ENCODE measurements at regions of chr9 and their contacts with region 1.

Region 1: DNA sequence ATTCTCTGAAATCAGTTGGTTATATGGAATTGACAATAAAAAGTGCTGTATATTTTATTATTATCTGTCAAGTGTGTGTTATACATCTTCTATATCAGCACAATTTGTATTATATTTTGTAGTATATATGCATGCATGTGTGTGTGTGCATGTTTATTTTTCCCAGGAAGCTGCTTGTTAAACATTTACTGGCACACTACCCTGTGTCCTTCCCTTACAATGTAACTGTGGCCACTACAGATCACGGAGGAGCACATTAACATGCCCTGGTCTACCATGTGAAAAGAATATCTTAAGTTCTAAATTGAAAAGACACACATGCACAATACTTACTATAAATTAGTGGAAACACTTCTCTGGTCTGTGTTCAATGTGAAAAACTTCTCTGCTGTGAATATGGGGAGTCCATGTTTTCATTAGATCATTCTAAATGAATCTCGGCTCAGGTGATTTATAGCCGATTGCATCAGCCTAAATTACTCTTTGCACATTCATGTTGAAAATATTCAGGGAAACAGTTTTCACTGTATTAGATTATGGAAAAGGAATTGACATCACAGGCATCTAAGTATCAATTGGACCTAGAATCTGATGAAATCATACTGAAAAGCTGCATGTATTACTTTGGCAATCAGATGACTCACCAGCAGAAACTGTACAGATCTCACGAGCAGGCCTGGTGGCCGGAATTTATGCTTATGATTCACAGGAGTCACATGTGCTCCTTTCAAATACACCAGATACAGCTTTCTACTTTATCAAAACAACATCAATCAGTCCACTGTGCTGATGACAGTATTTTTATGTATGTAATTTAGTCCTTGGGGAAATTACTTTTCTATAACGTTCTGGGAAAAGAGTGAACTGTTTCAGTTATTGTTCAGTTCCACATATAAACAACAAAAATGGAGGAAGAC is 39.4 kb downstream of the LURAP1L start:
- DNase-seq: peak; percentile 97
- ATAC-seq: peak; percentile 90
- H3K4me3 ChIP-seq: peak overlapping the region; percentile 32 to 45
- H3K27ac ChIP-seq: peak overlapping the region; percentile 78
- H3K4me1 ChIP-seq: peaks cover 29 to 43% of the 10 kb centered on the region in 2 experiments; a peak in 3 of 4 replicates
- H3K27me3 ChIP-seq: no peaks in the 10 kb centered on the region
- CTCF ChIP-seq: peak in 2 of 3 experiments; percentile 36 to 46; a peak in 4 of 6 replicates
- POLR2A ChIP-seq: no peak
- RAD21 ChIP-seq: peak; percentile 19

Region 2: DNA sequence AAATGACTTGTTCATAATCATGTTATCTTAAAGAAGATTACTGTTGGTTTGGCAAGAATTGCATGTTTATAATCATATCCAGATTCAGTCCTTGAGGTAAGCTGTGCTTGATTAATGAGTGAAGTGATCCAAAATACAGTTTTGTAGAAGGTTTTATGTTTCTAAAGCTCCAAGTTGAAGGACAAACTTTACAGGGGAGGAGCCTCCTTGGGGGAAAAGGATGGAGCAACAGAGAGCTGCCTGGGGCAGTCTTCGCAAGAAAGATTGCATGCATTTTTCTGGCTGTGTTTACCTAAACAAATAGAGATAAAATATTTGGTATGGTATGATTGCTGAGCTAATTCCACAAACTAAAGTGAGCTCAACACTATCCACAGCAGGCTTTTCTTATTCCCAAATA is 310.5 kb before region 1 on chr9:
- CTCF ChIA-PET with region 1: no interaction called
- POLR2A ChIA-PET with region 1: no interaction called
- RAD21 ChIA-PET with region 1: no interaction called
- intact Hi-C with region 1: no loop called
- DNase-seq: no peak
- ATAC-seq: no peak
- H3K4me3 ChIP-seq: no peak overlapping the region
- H3K27ac ChIP-seq: no peak overlapping the region
- H3K4me1 ChIP-seq: no peaks in the 10 kb centered on the region
- H3K27me3 ChIP-seq: no peaks in the 10 kb centered on the region
- CTCF ChIP-seq: no peak
- POLR2A ChIP-seq: no peak
- RAD21 ChIP-seq: no peak

Region 3: DNA sequence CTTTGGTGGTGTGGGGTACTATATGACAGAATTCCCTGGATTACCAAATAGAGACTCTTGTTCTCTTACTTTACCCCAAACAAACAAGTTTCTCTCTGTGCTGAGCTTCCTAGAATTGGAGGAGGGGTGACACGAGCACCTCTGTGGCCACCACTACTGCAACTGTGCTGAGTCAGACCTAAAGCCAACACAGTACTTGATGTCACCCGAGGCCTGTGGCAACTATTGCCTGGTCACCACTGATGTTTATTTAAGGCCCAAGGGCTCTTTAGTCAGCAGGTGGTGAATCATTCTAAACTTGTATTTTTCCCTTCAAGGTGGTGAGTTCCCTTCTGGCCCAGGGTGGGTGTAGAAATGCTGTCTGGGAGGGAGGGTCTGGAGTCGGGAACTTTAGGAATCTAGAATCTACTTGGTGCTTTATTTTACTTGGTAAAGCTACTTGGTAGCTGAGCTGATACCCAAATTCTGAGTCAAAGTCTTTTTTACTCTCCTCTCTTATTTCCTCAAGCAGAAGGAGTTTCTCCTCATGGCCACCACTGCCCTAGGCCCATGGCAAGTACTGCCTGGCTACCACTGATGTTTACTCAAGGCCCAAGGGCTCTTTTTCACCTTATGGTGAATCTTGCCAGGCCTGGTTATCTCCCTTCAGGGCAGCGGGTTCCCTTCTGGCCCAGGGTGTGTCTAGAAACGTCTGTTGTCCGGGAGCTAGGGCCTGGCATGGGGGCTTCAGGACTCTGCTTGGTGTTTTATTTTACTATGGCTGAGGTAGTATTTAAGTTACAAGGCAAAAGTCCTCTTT is 29.6 kb before region 1 on chr9:
- CTCF ChIA-PET with region 1: no interaction called
- POLR2A ChIA-PET with region 1: interaction called, 14 read pairs
- RAD21 ChIA-PET with region 1: interaction called in 1 of 2 experiments, 8 read pairs
- intact Hi-C with region 1: loop called (anchors 1 kb)
- DNase-seq: peak; percentile 95
- ATAC-seq: peak; percentile 90
- H3K4me3 ChIP-seq: peak overlapping the region; percentile 11 to 19; a peak in 3 of 4 replicates
- H3K27ac ChIP-seq: peak overlapping the region; percentile 97
- H3K4me1 ChIP-seq: peaks cover 29 to 31% of the 10 kb centered on the region in 2 experiments
- H3K27me3 ChIP-seq: no peaks in the 10 kb centered on the region
- CTCF ChIP-seq: no peak
- POLR2A ChIP-seq: no peak
- RAD21 ChIP-seq: peak; percentile 29

Region 4: DNA sequence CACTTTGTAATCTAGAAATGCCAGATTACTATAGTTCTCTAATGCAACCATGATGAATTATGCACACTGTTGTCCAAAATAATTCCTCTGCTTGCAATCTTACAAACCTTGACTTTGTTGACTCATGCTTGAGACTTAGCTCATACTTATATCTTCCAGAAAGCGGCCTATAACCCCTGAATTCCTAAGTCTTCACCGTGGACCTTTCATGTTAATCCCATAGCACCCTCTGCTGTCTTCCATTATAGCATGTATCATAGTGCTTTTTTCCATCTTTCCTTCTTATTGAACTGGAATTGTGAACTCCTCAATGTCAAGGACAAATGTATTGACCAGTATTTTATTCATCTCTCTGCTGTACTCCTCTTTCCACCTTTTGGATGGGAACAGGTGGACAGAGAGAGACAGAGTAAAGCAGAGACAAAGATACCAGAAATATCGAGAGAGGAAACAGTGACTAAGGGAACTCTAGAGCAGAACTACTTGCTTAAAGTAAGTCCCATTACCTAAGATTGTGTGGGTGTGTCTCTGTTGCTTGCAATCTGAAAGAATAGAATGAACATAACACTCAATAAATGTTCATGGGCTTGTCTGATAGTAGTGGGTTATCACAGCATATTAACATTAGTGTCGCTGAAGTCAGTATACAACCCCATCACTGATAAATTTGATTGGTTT is 70.7 kb after region 1 on chr9:
- CTCF ChIA-PET with region 1: interaction called, 3 read pairs
- POLR2A ChIA-PET with region 1: no interaction called
- RAD21 ChIA-PET with region 1: no interaction called
- intact Hi-C with region 1: loop called (anchors 2 kb)
- DNase-seq: peak; percentile 55
- ATAC-seq: peak; percentile 87
- H3K4me3 ChIP-seq: no peak overlapping the region
- H3K27ac ChIP-seq: no peak overlapping the region
- H3K4me1 ChIP-seq: no peaks in the 10 kb centered on the region
- H3K27me3 ChIP-seq: no peaks in the 10 kb centered on the region
- CTCF ChIP-seq: peak; percentile 45 to 88 (median 60)
- POLR2A ChIP-seq: no peak
- RAD21 ChIP-seq: peak; percentile 94